SK-N-SH (cell line): ENCODE measurements at regions of chr7 and their contacts with region 1.

Region 1: DNA sequence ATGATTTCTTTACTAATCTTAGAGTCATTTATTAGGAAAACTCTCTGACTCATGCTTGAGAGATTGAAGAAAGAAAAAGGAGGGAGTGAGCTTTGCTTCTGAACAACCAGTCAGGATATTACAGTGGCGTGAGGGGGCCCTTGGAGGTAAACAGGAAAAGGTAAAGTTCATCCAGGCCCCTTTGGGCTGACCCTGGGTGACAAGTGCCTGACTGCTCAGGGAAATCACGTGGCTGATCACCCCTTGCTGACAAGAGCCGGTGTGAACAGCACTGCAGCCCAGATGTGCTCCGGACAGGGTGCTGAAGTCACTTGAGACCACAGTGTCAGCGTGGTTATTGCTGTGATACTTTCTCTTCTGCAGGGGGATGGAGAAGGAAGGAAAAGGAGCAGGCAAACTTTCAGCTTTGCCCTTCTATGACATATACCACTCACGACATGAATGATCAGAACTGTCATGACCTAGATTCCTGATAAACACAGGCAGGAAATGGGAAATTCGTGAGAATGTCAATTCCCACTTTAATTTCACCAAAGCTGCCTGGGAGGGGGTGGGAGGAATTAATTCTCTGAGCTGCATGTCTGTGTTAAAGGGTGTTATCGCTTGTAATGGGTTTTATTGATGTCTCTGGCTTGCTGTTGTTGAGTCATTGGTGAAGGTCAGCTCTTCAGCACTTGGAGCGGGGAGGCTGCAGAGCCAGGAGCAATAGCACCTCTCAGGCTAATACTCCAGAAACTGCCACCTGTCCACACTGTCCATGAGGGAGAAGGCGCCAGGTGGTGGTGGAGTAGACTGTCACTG is 139.8 kb upstream of the AOAH start:
- DNase-seq: peak; percentile 40
- H3K4me3 ChIP-seq: no peak overlapping the region; a peak in 1 of 4 replicates
- H3K27ac ChIP-seq: peak overlapping the region in 1 of 2 experiments; percentile 95; a peak in 2 of 4 replicates
- H3K4me1 ChIP-seq: peaks cover 0 to 21% of the 10 kb centered on the region in 2 experiments; a peak in 2 of 4 replicates
- H3K27me3 ChIP-seq: no peaks in the 10 kb centered on the region
- CTCF ChIP-seq: no peak
- EP300 ChIP-seq: peak in 1 of 2 experiments; percentile 83; a peak in 1 of 4 replicates
- RAD21 ChIP-seq: peak; percentile 16; the same call in 1 of the 2 replicates

Region 2: DNA sequence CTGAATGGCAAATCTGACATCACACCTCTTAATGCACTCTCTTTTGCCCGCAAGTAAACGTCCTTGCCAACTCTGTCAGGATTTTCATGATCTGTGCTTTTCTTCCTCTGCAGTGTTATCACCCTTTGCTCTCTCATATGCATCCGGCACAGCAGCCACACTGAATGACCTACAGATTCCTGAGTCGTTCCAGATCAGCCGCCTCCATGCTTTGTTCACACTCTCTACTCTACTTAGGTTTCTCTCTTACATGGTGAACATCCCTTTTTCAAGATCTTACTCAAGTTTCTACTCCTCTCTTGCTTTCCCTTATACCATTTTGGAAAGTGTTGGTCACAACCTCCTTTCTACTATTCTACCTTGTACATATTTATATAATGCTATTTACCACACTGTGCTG is 12.1 kb before region 1 on chr7:
- CTCF ChIA-PET with region 1: no interaction called
- POLR2A ChIA-PET with region 1: no interaction called
- DNase-seq: peak; percentile 34
- H3K4me3 ChIP-seq: no peak overlapping the region
- H3K27ac ChIP-seq: peak overlapping the region in 1 of 2 experiments; percentile 89; a peak in 2 of 4 replicates
- H3K4me1 ChIP-seq: peaks cover 0 to 11% of the 10 kb centered on the region in 2 experiments; a peak in 2 of 4 replicates
- H3K27me3 ChIP-seq: no peaks in the 10 kb centered on the region
- CTCF ChIP-seq: no peak
- EP300 ChIP-seq: no peak
- RAD21 ChIP-seq: no peak

Region 3: DNA sequence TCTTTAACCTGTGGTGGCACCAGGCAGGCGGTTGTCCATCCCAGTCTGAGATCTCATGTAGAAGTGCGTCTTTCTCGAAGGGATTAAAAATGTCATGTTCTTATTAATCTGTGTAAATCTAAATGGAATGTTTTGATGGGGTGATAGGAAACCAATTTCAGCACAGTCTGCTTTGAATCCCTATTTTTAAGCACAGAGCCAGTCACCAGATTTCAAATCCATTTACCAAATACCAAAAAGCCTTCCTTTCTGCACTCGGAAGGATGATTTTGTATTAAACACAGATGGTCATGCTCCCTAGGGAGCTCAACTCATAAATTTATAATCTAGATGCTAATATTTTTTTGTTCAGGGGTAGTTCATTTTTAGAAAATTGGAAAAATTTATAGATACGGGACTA is 20.8 kb after region 1 on chr7:
- CTCF ChIA-PET with region 1: interaction called, 12 read pairs
- POLR2A ChIA-PET with region 1: no interaction called
- DNase-seq: no peak
- H3K4me3 ChIP-seq: no peak overlapping the region
- H3K27ac ChIP-seq: peak overlapping the region in 1 of 2 experiments; percentile 91; a peak in 2 of 4 replicates
- H3K4me1 ChIP-seq: peaks cover 0 to 40% of the 10 kb centered on the region in 2 experiments; a peak in 2 of 4 replicates
- H3K27me3 ChIP-seq: no peaks in the 10 kb centered on the region
- CTCF ChIP-seq: no peak
- EP300 ChIP-seq: peak in 1 of 2 experiments; percentile 42; a peak in 1 of 4 replicates
- RAD21 ChIP-seq: no peak; the same call in 1 of the 2 replicates

Region 4: DNA sequence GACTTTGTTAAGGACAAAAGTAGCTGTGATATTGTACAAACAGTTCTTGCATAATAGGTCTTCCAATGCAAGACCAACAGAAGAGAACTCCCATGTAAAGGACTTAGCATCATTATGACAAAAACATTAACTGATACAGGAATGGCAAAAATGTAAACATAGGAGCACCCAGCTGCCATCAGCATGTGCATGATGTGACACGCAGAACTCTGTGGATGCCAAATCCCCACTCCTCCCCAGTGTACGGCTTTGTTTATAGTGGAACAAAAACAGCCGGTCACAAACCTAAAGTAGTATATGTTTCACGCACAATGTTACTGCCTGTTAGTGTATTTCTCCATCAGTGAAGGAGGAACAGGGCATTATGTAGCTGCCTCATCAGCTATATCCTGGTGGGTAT is 176.2 kb after region 1 on chr7:
- CTCF ChIA-PET with region 1: no interaction called
- POLR2A ChIA-PET with region 1: no interaction called
- DNase-seq: no peak
- H3K4me3 ChIP-seq: no peak overlapping the region
- H3K27ac ChIP-seq: no peak overlapping the region
- H3K4me1 ChIP-seq: no peaks in the 10 kb centered on the region; a peak in 1 of 4 replicates
- H3K27me3 ChIP-seq: no peaks in the 10 kb centered on the region
- CTCF ChIP-seq: no peak
- EP300 ChIP-seq: no peak
- RAD21 ChIP-seq: no peak

Region 5: GRCh38 chr7:37128327-37129034 is 264.4 kb after region 1 on chr7:
- CTCF ChIA-PET with region 1: no interaction called
- POLR2A ChIA-PET with region 1: no interaction called
- DNase-seq: no peak
- H3K4me3 ChIP-seq: no peak overlapping the region
- H3K27ac ChIP-seq: no peak overlapping the region
- H3K4me1 ChIP-seq: no peaks in the 10 kb centered on the region; a peak in 1 of 4 replicates
- H3K27me3 ChIP-seq: no peaks in the 10 kb centered on the region
- CTCF ChIP-seq: no peak
- EP300 ChIP-seq: no peak
- RAD21 ChIP-seq: no peak